ENCODE measurements at regions of chr5 and their contacts with region 1.

Region 1: DNA sequence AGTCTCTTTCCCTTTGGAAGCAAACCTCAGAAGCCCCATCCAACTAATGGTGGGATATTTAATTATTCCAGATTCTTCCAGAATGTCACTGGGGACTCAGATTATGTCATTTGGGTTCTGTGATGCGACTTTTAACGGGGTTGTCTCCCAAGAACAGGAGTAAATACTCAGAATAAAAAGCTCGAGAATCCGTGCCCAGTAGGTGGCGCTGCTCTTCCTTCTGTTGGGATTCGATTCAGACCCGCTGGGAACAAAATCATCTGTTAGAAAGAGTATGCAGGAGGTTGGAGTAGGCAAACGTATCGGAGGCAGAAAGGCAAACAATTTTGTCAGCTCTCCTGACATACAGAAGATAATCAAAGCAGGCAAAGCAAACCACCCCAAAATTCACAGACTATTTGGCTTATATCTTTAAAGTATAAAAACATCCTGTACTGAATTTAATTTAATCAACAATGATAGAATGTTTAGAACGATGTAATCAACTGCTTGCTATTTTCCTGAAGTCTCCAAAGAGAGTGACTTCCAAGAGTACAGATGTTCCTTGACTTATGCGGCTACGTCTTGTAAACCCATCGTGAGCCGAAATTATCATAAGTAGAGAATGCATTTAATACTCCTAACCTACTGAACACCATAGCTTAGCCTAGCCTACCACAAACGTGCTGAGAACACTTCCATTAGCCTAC is 169.8 kb upstream of the RAI14 start:
- DNase-seq: peak; percentile 78 to 89
- H3K4me3 ChIP-seq: no peak overlapping the region
- H3K27ac ChIP-seq: peak overlapping the region; percentile 95
- H3K4me1 ChIP-seq: peaks cover 46% of the 10 kb centered on the region
- H3K27me3 ChIP-seq: no peaks in the 10 kb centered on the region
- CTCF ChIP-seq: peak; percentile 99

Region 2: DNA sequence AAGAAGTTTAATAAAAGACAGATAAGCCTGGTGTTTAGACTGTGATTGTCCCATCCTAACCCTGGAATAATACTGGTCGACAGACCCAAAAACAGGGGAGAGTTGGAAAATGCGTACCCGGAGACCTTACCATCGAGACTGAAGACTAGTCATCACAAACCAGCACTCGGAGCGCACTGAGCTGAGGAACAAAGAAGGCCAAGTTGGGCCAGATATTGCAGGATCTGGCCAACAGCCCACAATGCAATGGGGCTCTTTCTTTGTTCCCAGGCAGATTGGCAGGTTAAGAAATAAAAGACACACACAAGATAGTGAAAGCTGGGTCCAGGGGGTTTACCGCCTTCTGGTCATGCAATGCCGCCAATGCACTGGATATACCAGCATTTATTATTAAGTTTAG is 18.9 kb before region 1 on chr5:
- CTCF ChIA-PET with region 1: no interaction called
- POLR2A ChIA-PET with region 1: no interaction called
- intact Hi-C with region 1: no loop called
- DNase-seq: peak in 1 of 2 experiments; percentile 11
- H3K4me3 ChIP-seq: no peak overlapping the region
- H3K27ac ChIP-seq: no peak overlapping the region
- H3K4me1 ChIP-seq: peaks cover 6% of the 10 kb centered on the region; the same call in 1 of the 2 replicates
- H3K27me3 ChIP-seq: no peaks in the 10 kb centered on the region
- CTCF ChIP-seq: no peak

Region 3: DNA sequence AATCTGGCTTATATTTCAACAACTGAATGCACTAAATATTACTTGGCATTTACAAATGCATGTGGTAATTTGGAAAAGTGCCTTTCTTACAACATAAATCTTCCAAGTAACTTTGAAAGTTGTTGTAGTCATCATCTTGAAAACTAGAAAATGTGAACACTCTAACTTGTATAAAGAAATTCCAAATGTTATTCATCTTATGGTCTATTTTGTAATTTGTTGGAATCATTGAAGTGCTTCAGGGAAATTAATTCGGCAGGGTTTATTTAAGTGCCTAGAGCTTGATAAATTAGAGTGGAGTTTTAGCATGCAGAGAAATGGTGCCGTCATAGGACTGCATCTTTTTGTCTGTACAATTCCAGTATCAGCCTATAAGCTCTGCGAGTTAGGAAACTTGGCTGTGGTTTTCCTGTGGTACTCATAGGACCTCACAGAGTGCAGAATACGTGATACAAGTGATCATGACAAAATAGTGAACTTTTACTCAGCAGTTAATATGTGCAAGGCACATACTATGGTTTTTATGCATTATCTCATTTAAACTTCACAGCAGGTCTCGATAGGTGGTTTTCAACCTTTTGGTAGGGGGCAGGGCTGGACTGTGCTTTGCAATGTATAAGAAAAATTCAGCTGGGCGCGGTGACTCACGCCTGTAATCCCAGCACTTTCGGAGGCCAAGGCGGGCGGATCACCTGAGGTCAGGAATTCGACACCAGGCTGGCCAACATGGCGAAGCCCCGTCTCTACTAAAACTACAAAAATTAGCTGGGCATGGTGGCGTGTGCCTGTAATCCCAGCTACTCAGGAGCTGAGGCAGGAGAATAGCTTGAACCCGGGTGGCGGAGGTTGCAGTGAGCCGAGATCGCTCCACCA is 249.4 kb after region 1 on chr5:
- CTCF ChIA-PET with region 1: no interaction called
- POLR2A ChIA-PET with region 1: no interaction called
- intact Hi-C with region 1: loop called (anchors 2 kb)
- DNase-seq: peak; percentile 50 to 67
- H3K4me3 ChIP-seq: no peak overlapping the region
- H3K27ac ChIP-seq: peak overlapping the region; percentile 20
- H3K4me1 ChIP-seq: peaks cover 14% of the 10 kb centered on the region
- H3K27me3 ChIP-seq: no peaks in the 10 kb centered on the region
- CTCF ChIP-seq: no peak

Region 4: DNA sequence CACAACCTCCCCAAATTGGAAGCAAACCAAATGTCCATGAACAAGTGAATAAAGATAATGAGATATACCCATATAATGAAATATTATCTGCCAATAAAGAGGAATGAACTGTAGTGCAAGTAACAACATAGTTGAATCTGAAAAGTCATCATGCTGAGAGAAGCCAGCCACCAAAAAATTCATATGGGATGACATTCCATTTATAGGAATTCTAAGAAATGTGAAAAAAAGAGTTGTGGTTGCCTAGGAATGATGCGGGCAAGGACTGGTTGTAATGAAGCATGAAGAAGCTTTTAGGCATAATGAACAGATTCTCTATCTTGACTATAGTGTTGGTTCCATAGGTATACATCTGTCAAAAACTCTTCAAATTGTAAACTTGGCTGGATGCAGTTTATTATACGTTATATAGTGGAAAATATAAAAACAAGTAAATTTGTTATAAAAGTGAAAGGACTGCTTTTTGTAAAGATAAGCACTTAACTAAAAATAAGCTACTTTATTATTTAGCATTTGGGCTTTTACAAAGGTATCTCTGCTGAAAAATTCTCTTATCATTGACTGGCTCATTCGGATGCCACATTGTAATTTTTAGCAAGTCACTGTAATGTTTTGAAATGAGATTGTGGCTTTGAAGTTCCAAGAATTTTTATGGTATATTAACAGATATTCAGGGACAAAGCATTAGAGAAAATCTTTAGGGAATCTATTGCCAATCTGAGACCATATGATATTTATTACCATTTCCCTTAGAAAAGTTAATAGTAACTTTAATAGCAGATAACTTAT is 331.5 kb after region 1 on chr5:
- CTCF ChIA-PET with region 1: no interaction called
- POLR2A ChIA-PET with region 1: no interaction called
- intact Hi-C with region 1: loop called (anchors 5 kb)
- DNase-seq: no peak
- H3K4me3 ChIP-seq: no peak overlapping the region
- H3K27ac ChIP-seq: peak overlapping the region; percentile 7; the same call in 1 of the 2 replicates
- H3K4me1 ChIP-seq: no peaks in the 10 kb centered on the region
- H3K27me3 ChIP-seq: no peaks in the 10 kb centered on the region
- CTCF ChIP-seq: no peak

Region 5: GRCh38 chr5:34898258-34898895 is 412.1 kb after region 1 on chr5:
- CTCF ChIA-PET with region 1: interaction called, 34 read pairs
- POLR2A ChIA-PET with region 1: no interaction called
- intact Hi-C with region 1: loop called (anchors 1 kb)
- DNase-seq: peak; percentile 71 to 84
- H3K4me3 ChIP-seq: no peak overlapping the region
- H3K27ac ChIP-seq: no peak overlapping the region
- H3K4me1 ChIP-seq: peaks cover 17% of the 10 kb centered on the region
- H3K27me3 ChIP-seq: no peaks in the 10 kb centered on the region
- CTCF ChIP-seq: peak; percentile 98

Region 6: GRCh38 chr5:35003018-35003957 is 517.0 kb after region 1 on chr5:
- CTCF ChIA-PET with region 1: interaction called, 3 read pairs
- POLR2A ChIA-PET with region 1: no interaction called
- intact Hi-C with region 1: loop called (anchors 1 kb)
- DNase-seq: peak; percentile 56 to 81
- H3K4me3 ChIP-seq: no peak overlapping the region
- H3K27ac ChIP-seq: no peak overlapping the region
- H3K4me1 ChIP-seq: no peaks in the 10 kb centered on the region
- H3K27me3 ChIP-seq: peaks cover 48% of the 10 kb centered on the region
- CTCF ChIP-seq: peak; percentile 99

Measured in PC-9 (cell line).